Posterior vena cava (tissue), 2 donors: ENCODE measurements at regions of chr17 and their contacts with region 1.

Region 1: GRCh38 chr17:20103454-20104446 is 94.6 kb downstream of the SPECC1 start:
- DNase-seq: no peak

Region 2: DNA sequence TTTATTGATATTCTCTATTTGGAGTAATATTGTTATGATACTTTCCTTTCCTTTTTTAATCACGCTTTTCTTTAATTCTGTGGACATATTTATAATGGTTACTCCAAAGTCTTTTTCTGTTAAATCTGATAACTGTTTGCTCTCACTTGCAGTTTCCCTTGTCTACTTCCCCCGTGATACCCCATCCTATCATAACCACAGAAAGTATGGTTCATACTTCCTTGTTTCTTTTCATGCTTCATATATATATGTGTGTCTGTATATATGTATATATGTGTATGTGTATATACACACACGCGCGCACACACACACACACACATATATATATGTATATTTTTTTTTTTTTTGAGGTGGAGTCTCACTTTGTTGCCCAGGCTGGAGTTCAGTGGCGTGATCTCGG is 71.1 kb before region 1 on chr17:
- intact Hi-C with region 1: loop called in 1 of 2 experiments (anchors 2 kb)
- DNase-seq: no peak